Heart left ventricle (tissue), 16 donors: ENCODE measurements at regions of chr12 and their contacts with region 1.

Region 1: DNA sequence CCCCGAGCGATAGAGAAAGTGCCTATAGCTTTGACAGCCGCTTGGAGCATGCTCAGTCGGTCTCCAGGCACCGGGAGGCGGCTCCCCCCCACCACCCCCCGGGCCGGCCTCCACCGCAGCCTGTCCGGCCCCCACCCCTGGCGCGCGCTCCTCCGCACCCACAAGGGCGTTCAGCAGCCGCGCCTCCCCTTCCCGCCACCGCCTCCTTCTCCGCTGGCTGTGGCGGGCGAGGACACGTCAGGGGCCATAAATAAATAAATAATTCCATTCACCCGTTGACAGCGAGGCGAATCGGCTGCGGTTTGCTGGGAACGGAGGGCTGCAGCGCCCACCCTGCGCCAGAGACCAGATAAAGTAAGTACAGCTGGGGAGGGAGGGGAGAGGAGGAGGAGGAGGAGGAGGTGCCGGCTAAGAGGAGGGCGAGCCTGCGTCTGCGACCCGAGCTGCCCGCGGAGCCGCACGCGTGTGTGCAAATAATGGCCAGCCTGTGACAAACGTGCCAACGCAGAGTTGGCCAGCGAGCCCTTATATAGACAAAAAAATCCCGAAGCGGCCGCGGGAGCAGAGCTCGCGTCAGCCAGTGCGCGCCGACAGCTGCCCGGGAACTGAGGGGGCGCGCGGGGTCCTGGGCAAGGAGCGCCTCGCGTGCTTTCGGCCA is at the start of gene SLC16A7:
- DNase-seq: peak; percentile 90 to 96 (median 94)
- ATAC-seq: peak; percentile 82 to 92 (median 88)
- H3K4me3 ChIP-seq: peak within 1 kb of the TSS; percentile 61 to 87 (median 70)
- H3K27ac ChIP-seq: peak within 1 kb of the TSS; percentile 80 to 98 (median 97)
- H3K4me1 ChIP-seq: peaks cover 0 to 43% (median 21%) of the 10 kb centered on the region in 12 donors
- H3K27me3 ChIP-seq: no peaks in the 10 kb centered on the region
- CTCF ChIP-seq: peak in 1 of 12 donors; percentile 14
- POLR2A ChIP-seq: peak in 1 of 2 donors; percentile 29
- total RNA-seq, gene SLC16A7: 60.6 to 227 (median 169) TPM

Region 2: GRCh38 chr12:59344224-59344623 is 251.8 kb before region 1 on chr12:
- intact Hi-C with region 1: no loop called
- DNase-seq: no peak
- ATAC-seq: no peak
- H3K4me3 ChIP-seq: no peak overlapping the region
- H3K27ac ChIP-seq: no peak overlapping the region
- H3K4me1 ChIP-seq: no peaks in the 10 kb centered on the region
- H3K27me3 ChIP-seq: no peaks in the 10 kb centered on the region
- CTCF ChIP-seq: no peak
- POLR2A ChIP-seq: no peak

Region 3: DNA sequence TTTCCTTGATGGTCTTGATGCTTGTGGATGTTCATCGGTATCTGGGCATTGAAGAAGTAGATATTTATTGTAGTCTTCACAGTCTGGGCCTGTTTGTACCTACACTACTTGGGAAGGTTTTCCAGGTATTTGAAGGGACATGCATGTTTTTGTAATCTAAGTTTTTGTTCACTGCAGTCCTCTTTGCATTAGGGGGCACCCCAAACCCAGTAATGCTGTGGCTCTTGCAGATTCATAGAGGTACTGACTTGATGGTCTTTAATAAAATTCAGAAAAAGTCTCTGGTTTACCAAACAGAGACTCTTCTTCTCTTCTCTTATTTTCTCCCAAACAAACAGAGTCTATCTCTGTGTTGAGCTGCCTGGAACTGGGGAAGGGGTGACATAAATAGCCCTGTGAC is 151.1 kb before region 1 on chr12:
- intact Hi-C with region 1: loop called in 1 of 10 experiments (anchors 10 kb)
- DNase-seq: no peak
- ATAC-seq: no peak
- H3K4me3 ChIP-seq: no peak overlapping the region
- H3K27ac ChIP-seq: no peak overlapping the region
- H3K4me1 ChIP-seq: no peaks in the 10 kb centered on the region
- H3K27me3 ChIP-seq: no peaks in the 10 kb centered on the region
- CTCF ChIP-seq: peak in 10 of 12 donors; percentile 13 to 50 (median 41)
- POLR2A ChIP-seq: no peak

Region 4: GRCh38 chr12:59660148-59660547 is 64.1 kb after region 1 on chr12:
- intact Hi-C with region 1: loop called in 3 of 10 experiments (anchors 2 to 5 kb)
- DNase-seq: no peak
- ATAC-seq: no peak
- H3K4me3 ChIP-seq: no peak overlapping the region
- H3K27ac ChIP-seq: no peak overlapping the region
- H3K4me1 ChIP-seq: peaks cover 0 to 13% (median 0%) of the 10 kb centered on the region in 12 donors
- H3K27me3 ChIP-seq: no peaks in the 10 kb centered on the region
- CTCF ChIP-seq: no peak
- POLR2A ChIP-seq: no peak

Region 5: GRCh38 chr12:59665701-59666100 is 69.7 kb after region 1 on chr12:
- intact Hi-C with region 1: loop called in 3 of 10 experiments (anchors 2 to 5 kb)
- DNase-seq: no peak
- ATAC-seq: no peak
- H3K4me3 ChIP-seq: peak overlapping the region in 11 of 12 donors; percentile 2 to 55 (median 48)
- H3K27ac ChIP-seq: peak overlapping the region; percentile 27 to 82 (median 70)
- H3K4me1 ChIP-seq: peaks cover 0 to 8% (median 0%) of the 10 kb centered on the region in 12 donors
- H3K27me3 ChIP-seq: no peaks in the 10 kb centered on the region
- CTCF ChIP-seq: no peak
- POLR2A ChIP-seq: no peak

Region 6: GRCh38 chr12:59689776-59690175 is 93.8 kb after region 1 on chr12:
- intact Hi-C with region 1: loop called in 1 of 10 experiments (anchors 5 kb)
- DNase-seq: no peak
- ATAC-seq: no peak
- H3K4me3 ChIP-seq: no peak overlapping the region
- H3K27ac ChIP-seq: no peak overlapping the region
- H3K4me1 ChIP-seq: peaks cover 0 to 19% (median 0%) of the 10 kb centered on the region in 12 donors
- H3K27me3 ChIP-seq: no peaks in the 10 kb centered on the region
- CTCF ChIP-seq: no peak
- POLR2A ChIP-seq: no peak

Region 7: GRCh38 chr12:59780605-59781135 is 184.7 kb after region 1 on chr12:
- intact Hi-C with region 1: loop called in 4 of 10 experiments (anchors 5 to 10 kb)
- DNase-seq: no peak
- ATAC-seq: peak in 3 of 4 donors; percentile 56 to 83 (median 75)
- H3K4me3 ChIP-seq: no peak overlapping the region
- H3K27ac ChIP-seq: peak overlapping the region in 1 of 12 donors; percentile 17
- H3K4me1 ChIP-seq: peaks cover 0 to 3% (median 0%) of the 10 kb centered on the region in 12 donors
- H3K27me3 ChIP-seq: no peaks in the 10 kb centered on the region
- CTCF ChIP-seq: peak in 10 of 12 donors; percentile 9 to 55 (median 38)
- POLR2A ChIP-seq: no peak

Region 8: GRCh38 chr12:59808317-59808910 is 212.4 kb after region 1 on chr12:
- intact Hi-C with region 1: loop called in 2 of 10 experiments (anchors 10 kb)
- DNase-seq: no peak
- ATAC-seq: peak in 3 of 4 donors; percentile 57 to 82 (median 70)
- H3K4me3 ChIP-seq: no peak overlapping the region
- H3K27ac ChIP-seq: no peak overlapping the region
- H3K4me1 ChIP-seq: no peaks in the 10 kb centered on the region
- H3K27me3 ChIP-seq: no peaks in the 10 kb centered on the region
- CTCF ChIP-seq: peak; percentile 61 to 81 (median 68)
- POLR2A ChIP-seq: no peak